ENCODE measurements at regions of chr11 and their contacts with region 1.

Region 1: GRCh38 chr11:123470842-123471241 is 40.8 kb downstream of the GRAMD1B start:
- DNase-seq: no peak

Region 2: DNA sequence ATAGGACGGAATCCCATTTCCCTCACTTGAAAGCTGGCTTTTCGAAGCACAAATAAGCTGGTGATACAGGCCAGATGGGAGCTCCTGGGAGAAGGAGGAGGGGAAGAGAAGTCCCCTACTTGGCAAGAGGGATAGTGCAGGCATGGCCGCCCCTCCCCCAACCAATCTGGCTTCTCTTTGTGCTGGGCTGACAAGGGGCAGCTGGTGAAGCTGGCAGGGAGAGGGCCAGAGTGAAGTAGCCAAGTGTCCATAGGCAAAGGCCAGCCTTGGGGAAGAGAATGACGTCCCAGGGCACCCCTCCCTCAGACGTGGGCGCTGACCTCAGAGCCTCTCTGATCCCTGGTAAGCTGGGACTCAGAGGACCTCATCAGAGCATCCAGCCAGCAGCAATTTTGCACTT is 119.5 kb before region 1 on chr11:
- CTCF ChIA-PET with region 1: interaction called, 16 read pairs
- POLR2A ChIA-PET with region 1: no interaction called
- DNase-seq: no peak

Region 3: GRCh38 chr11:123494195-123495050 is 23.6 kb after region 1 on chr11:
- CTCF ChIA-PET with region 1: no interaction called
- POLR2A ChIA-PET with region 1: no interaction called
- DNase-seq: no peak

Measured in HEK293T (cell line).